Gastrocnemius medialis (tissue), 4 donors: ENCODE measurements at regions of chr17 and their contacts with region 1.

Region 1: GRCh38 chr17:80791758-80792284 is 199.8 kb upstream of the CHMP6 start:
- DNase-seq: peak; percentile 92 to 97
- ATAC-seq: peak; percentile 82 to 85
- H3K4me3 ChIP-seq: peak overlapping the region in 1 of 4 donors; percentile 20
- H3K27ac ChIP-seq: peak overlapping the region; percentile 76 to 89 (median 87)
- H3K4me1 ChIP-seq: peaks cover 53 to 72% of the 10 kb centered on the region in 2 donors
- H3K27me3 ChIP-seq: no peaks in the 10 kb centered on the region
- CTCF ChIP-seq: no peak
- POLR2A ChIP-seq: peak in 1 of 2 donors; percentile 42

Region 2: DNA sequence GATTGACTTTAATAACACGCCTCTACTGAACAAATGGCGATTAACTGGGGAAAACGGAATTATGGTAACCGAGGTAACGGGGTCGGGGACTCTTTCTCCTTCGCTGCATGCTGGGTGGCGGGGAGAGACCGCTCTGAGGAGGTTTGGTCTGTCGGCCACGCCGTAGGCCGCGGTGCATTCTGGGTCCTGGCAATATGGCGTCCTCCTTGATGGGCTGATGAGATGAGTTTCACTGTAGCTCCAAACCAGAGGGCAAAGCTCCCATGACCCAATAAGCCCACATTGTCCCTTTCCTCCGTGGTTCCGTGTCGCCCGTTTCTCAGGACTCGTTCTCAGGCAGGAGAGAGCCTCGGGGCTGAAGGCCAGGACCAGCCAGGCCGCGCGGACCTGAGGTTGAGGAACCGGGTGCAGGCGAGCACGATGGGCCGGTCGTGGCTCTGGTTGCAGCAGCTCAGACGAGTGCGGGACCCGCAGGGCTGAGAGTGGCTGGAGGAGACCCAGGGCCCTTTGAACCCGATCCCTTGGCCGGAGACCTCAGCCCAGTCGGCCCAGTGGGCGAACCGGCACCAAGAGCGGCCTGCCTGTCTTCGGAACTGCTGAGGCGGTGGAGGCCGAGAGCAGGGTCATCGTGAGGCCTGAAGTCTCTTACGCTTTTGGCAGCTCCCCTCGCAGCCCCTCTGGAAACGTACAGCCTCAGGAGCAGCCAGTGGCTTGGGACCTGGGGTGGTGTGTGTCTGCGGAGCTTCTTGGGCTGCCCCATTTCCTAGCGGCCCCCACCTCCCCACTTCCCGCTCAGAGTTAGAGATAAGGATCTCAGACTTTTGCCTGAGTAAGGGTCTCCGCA is 246.9 kb before region 1 on chr17 and contains the start of gene RPTOR:
- in situ Hi-C with region 1: no loop called
- intact Hi-C with region 1: loop called (anchors 10 kb)
- DNase-seq: peak; percentile 79 to 84
- ATAC-seq: peak; percentile 95 to 97
- H3K4me3 ChIP-seq: peak within 1 kb of the TSS; percentile 72 to 98 (median 96)
- H3K27ac ChIP-seq: peak within 1 kb of the TSS; percentile 84 to 89 (median 86)
- H3K4me1 ChIP-seq: peaks cover 25 to 40% of the 10 kb centered on the region in 2 donors
- H3K27me3 ChIP-seq: no peaks in the 10 kb centered on the region
- CTCF ChIP-seq: peak in 1 of 5 experiments; percentile 12
- POLR2A ChIP-seq: peak; percentile 24 to 33
- total RNA-seq, gene RPTOR: 47.6 to 56.9 (median 55.4) TPM

Region 3: GRCh38 chr17:80773243-80773991 is 18.4 kb before region 1 on chr17:
- in situ Hi-C with region 1: no loop called
- intact Hi-C with region 1: loop called (anchors 2 kb)
- DNase-seq: peak; percentile 94 to 95
- ATAC-seq: peak; percentile 81 to 82
- H3K4me3 ChIP-seq: peak overlapping the region; percentile 19 to 34 (median 23)
- H3K27ac ChIP-seq: peak overlapping the region; percentile 88 to 97 (median 93)
- H3K4me1 ChIP-seq: peaks cover 41 to 51% of the 10 kb centered on the region in 2 donors
- H3K27me3 ChIP-seq: no peaks in the 10 kb centered on the region
- CTCF ChIP-seq: no peak
- POLR2A ChIP-seq: peak; percentile 41 to 57

Region 4: DNA sequence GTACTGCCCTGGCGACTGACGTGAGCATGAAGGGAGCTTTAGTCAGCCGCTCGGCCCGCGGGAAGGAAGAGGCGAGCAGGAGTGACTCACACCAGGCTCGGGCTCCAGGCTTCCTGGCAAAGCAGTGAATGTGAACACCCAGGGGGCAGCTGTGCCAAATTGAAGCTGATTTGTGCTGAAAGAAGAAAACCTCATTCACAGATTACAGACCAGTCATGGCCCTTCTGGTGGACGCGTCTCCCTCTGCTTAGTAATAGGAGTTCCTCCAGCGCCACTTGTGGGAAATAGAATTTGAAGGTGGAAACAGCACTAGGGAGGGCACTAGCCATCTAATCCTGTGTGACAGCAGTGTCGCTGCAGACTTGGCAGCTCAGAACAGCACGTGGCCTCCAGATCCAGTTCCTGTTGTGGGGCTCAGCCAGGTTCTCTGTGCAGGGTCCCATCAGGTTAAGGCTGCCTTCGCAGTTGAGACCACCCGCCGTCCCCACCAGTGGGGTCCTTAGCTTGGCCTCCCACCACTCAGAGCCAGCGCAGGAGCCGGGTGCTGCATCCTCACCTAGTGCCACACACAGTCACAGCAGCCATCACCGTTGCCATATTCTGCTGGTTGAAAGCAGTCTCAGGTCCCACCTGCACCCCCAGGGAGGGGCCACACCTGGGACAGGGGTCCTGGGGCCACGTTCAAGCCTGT is 35.3 kb after region 1 on chr17:
- in situ Hi-C with region 1: no loop called
- intact Hi-C with region 1: loop called (anchors 1 kb)
- DNase-seq: peak; percentile 87 to 91
- ATAC-seq: peak; percentile 89
- H3K4me3 ChIP-seq: peak overlapping the region in 3 of 4 donors; percentile 6 to 22 (median 6)
- H3K27ac ChIP-seq: peak overlapping the region; percentile 86 to 98 (median 94)
- H3K4me1 ChIP-seq: peaks cover 20 to 21% of the 10 kb centered on the region in 2 donors
- H3K27me3 ChIP-seq: no peaks in the 10 kb centered on the region
- CTCF ChIP-seq: peak in 2 of 5 experiments; percentile 10 to 14
- POLR2A ChIP-seq: peak in 1 of 2 donors; percentile 40

Region 5: GRCh38 chr17:80942421-80943345 is 150.9 kb after region 1 on chr17:
- in situ Hi-C with region 1: no loop called
- intact Hi-C with region 1: no loop called
- DNase-seq: peak; percentile 64 to 86
- ATAC-seq: peak; percentile 69 to 77
- H3K4me3 ChIP-seq: no peak overlapping the region
- H3K27ac ChIP-seq: peak overlapping the region in 1 of 4 donors; percentile 10
- H3K4me1 ChIP-seq: peaks cover 10% of the 10 kb centered on the region in 2 donors
- H3K27me3 ChIP-seq: no peaks in the 10 kb centered on the region
- CTCF ChIP-seq: peak in 1 of 5 experiments; percentile 15
- POLR2A ChIP-seq: no peak